Activated CD8-positive, alpha-beta memory T cell treated with anti-CD3 and anti-CD28 coated beads, Interleukin-2, amount 10 ng/mL, durations not matched to agents 7 days and 5 days (primary cell): ENCODE measurements at regions of chr13 and their contacts with region 1.

Region 1: GRCh38 chr13:20160847-20161274 is at the start of gene GJA3:
- DNase-seq: peak; percentile 73
- ATAC-seq: peak; percentile 81
- H3K4me3 Mint-ChIP-seq: peak within 1 kb of the TSS; percentile 76
- H3K27ac Mint-ChIP-seq: peak within 1 kb of the TSS; percentile 5
- H3K4me1 Mint-ChIP-seq: peaks cover 21% of the 10 kb centered on the region
- H3K27me3 Mint-ChIP-seq: peaks cover 43% of the 10 kb centered on the region
- total RNA-seq, gene GJA3: 0.75 to 0.76 TPM

Region 2: DNA sequence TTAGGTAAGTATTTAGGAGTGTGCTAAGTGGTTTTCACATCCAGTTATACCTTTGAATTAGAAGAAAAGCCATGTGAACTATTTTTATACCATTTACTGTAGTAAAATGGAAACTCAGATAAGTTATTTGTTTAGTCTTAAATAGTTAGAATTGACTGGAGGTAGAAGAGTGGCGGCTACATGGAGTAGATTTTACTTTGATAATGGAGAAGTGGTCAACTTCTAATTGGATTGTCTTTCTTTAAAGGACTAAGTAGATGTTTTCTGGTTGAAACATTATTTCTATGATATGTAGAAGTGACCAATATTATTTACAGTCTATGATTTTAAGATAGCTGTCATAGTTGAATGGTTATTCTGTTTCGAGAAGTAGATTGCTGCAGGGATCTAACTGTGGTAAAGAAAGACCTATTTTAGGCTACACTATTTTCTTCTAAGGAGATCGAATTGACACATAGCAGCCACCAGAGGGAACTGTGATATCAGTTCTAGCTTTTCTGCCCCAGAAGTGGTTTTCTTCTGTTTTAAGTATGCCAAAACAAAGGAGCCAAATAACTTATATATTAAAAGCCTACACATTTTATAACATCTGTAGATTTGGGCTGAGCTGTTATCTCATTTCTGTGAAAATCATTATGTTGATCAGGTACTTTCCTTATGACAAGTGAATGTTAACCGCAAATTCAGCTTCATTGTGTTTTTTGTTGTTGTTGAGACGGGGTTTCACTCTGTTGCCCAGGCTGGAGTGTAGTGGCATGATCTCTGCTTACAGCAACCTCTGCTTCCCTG is 176.2 kb before region 1 on chr13:
- CTCF ChIA-PET with region 1: interaction called, 17 read pairs
- DNase-seq: no peak
- ATAC-seq: peak; percentile 68
- H3K4me3 Mint-ChIP-seq: no peak overlapping the region
- H3K27ac Mint-ChIP-seq: peak overlapping the region; percentile 73
- H3K4me1 Mint-ChIP-seq: peaks cover 32% of the 10 kb centered on the region
- H3K27me3 Mint-ChIP-seq: no peaks in the 10 kb centered on the region

Region 3: DNA sequence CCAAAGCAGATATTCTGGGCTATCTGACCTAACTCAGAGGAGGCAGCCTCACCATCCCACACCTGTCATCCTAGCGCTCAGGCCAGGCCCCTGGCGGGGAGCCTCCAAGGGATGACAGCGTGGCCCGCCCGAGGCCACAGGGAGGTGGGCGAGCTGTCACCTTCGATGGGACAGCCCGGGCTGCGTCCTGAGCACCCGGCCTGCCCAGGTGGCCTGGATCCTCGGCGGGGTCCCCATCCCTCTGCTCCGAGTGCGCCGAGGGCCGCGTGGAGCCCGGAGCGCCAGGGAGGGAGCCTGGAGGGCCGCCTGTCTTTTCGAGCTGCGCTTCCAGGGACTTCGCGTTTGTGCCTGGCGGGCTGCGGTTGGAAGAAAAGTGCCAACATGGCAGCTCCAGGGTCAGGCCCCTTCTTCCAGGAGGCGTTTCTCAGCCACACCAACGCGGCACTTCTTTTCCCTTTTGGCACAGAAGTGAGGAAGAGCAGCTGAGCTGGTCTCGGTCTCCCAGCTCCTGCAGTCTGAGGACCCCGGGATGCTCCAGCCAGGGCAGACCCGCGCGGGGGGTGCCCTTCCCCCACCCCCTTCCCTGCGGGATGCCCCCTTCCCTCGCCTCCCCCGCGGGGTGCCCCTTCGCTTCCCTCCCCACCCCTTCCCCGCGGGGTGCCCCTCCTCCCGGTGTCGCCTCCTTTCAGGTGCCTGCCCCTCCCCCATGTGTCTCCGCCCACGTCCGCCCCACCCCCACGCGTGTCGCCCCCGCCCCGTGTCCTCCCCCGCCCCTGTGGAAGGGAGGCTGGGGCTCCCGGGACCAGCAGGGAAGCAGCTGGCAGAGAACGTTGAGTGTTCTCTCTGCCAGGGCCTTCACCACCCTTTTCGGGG is 42.4 kb before region 1 on chr13:
- CTCF ChIA-PET with region 1: interaction called, 15 read pairs
- DNase-seq: no peak
- ATAC-seq: peak; percentile 29
- H3K4me3 Mint-ChIP-seq: peak overlapping the region; percentile 81
- H3K27ac Mint-ChIP-seq: peak overlapping the region; percentile 78
- H3K4me1 Mint-ChIP-seq: peaks cover 19% of the 10 kb centered on the region
- H3K27me3 Mint-ChIP-seq: peaks cover 7% of the 10 kb centered on the region

Region 4: GRCh38 chr13:20127577-20128466 is 33.0 kb before region 1 on chr13:
- CTCF ChIA-PET with region 1: interaction called, 37 read pairs
- DNase-seq: peak; percentile 63
- ATAC-seq: peak; percentile 84
- H3K4me3 Mint-ChIP-seq: peak overlapping the region; percentile 66
- H3K27ac Mint-ChIP-seq: peak overlapping the region; percentile 5
- H3K4me1 Mint-ChIP-seq: no peaks in the 10 kb centered on the region
- H3K27me3 Mint-ChIP-seq: peaks cover 32% of the 10 kb centered on the region